ENCODE measurements at regions of chr19 and their contacts with region 1.

Region 1: DNA sequence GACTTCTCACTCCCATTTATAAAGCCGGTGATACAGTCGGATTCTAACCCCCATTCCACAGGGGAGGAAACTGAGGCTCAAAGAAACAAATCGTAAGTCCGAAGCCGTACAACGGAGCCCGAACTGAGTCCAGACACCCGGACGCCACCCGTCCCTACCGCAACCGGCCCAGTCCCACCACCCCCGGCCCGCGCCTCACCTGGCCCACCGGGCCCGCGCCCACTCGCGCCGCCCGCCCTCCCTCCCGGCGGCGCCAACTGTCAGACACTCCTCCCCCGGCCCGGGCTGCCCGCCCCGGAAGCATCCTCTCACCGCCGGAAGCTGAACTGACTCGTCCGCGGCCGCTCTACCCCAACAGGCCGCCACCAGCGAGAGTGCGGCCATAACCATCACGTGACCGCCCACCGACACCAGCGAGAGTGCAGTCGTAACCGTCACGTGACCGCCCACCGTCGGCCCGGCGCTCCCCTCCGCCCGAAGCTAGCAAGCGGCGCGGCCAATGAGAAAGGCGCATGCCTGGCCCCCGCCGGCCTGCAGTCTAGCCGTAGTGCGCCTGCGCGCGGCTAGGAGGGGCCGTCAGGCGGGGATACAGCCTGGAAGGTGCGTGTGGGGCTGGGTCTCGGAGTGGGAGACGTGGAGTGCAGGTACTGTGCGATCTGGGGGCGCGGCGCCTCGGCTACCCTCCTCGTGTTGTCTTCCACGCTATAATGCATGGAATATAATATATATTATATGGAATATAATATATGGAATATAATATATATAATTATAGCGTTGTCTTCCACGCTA is at the starts of genes C19orf47 and PLD3:
- DNase-seq: peak; percentile 100
- total RNA-seq, gene C19orf47: 13.2 to 16.9 TPM
- total RNA-seq, gene PLD3: 153 to 281 TPM

Region 2: DNA sequence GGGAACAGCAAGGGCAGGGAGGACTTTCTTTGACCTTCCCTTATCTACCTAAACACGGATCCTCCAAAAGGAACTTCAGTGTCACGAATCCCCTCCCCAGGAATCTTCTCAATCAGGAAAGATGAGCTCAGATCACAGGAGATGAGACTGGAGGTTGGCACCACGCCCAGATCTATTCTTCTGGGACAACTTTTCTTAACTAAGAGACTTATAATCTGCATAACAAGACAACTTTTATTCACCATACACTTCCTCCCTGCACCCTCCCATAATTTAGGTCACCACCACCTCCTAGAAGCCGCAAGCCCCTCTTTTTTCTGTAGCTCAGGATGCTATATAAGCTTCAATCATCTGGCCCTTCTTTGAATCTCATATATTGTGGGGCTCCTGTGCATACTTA is 44.0 kb before region 1 on chr19:
- intact Hi-C with region 1: no loop called
- DNase-seq: no peak

Region 3: DNA sequence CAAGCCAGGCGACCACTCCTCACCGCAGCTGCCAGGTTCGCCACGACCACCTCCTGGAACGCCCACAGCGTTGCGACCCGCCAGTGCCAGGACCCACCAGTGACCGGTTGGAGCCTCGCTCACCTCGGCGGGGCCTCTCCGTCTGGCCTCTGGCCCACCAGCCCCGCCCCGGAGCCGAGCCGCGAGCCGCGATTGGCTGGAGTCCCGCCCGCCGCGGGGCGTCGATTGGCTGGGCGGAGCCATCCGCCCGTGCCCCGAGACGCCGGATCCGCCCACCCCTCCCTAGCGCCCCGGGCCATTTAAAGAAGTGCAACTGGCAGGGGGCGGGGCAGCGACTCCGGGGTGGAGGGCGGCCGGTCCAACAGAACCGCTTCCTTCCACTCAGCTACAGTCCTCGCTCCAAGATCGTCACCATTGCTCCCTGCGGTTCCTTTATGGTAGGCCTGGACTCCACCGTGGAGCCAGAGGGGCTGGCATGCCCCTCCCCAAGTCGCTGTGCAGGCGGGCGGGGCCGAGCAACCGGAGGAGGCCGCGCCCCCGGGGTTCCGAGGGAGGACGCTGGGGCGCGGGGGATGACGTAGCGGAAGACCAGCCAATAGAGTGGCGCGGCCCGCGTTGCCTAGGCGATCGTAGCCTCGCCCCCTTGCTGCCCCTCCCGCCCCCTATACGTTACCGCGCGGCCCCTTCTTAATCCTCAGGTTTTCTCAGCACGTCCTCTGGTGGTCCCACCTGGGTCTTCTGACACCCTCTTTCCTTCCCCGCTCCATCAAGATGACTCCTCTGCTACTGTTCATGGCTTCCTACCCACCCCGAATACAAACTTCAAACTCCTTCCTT is 96.1 kb after region 1 on chr19 and contains the start of gene SERTAD3:
- intact Hi-C with region 1: loop called in 1 of 2 experiments (anchors 10 kb)
- DNase-seq: peak; percentile 99
- total RNA-seq, gene SERTAD3: 33.8 to 48.6 TPM

Measured in posterior vena cava (tissue), 2 donors.